K562 (cell line): ENCODE measurements at regions of chr9 and their contacts with region 1.

Region 1: GRCh38 chr9:12719431-12719830 is 26.2 kb downstream of the TYRP1 start:
- DNase-seq: no peak
- ATAC-seq: no peak
- H3K4me3 ChIP-seq: no peak overlapping the region
- H3K27ac ChIP-seq: no peak overlapping the region
- H3K4me1 ChIP-seq: no peaks in the 10 kb centered on the region
- H3K27me3 ChIP-seq: no peaks in the 10 kb centered on the region
- CTCF ChIP-seq: peak in 1 of 3 experiments; percentile 22; a peak in 1 of 6 replicates
- EP300 ChIP-seq: no peak
- POLR2A ChIP-seq: no peak
- RAD21 ChIP-seq: peak in 1 of 2 experiments; percentile 48; a peak in 3 of 4 replicates

Region 2: DNA sequence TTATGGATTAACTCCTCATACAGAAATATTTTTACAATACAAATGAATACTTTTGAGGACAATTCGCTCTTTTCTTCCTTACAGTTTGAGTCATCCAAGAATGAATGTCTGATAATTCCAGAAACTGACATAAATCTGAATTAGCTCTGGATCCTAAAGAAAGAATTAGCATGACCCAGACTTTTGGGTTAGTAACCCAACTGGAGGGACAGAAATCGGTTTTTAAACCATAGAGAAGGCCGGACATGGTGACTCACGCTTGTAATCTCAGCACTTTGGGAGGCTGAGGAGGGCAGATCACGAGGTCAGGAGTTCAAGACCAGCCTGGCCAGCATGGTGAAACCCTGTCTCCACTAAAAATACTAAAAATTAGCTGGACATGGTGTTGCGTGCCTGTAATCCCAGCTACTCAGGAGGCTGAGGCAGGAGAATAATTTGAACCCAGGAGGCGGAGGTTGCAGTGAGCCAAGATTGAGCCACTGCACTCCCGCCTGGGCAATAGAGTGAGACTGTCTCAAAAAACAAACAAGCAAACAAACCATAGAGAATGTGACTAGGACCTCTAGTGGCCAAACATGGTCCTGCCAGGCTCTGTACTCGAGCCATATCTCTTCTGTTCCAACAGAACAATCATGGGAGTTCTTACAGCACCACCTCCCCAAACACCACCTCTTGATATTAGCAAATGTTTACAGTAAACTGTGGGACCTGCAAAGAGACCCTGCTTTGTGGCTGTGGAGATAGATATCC is 100.2 kb after region 1 on chr9:
- CTCF ChIA-PET with region 1: interaction called, 3 read pairs
- POLR2A ChIA-PET with region 1: no interaction called
- in situ Hi-C with region 1: no loop called
- intact Hi-C with region 1: loop called (anchors 5 kb)
- DNase-seq: peak; percentile 4 to 18 (median 10)
- ATAC-seq: peak; percentile 73
- H3K4me3 ChIP-seq: no peak overlapping the region
- H3K27ac ChIP-seq: no peak overlapping the region
- H3K4me1 ChIP-seq: no peaks in the 10 kb centered on the region
- H3K27me3 ChIP-seq: no peaks in the 10 kb centered on the region
- CTCF ChIP-seq: peak; percentile 19 to 41 (median 38); a peak in 3 of 6 replicates
- EP300 ChIP-seq: no peak
- POLR2A ChIP-seq: no peak
- RAD21 ChIP-seq: peak; percentile 47 to 61

Region 3: GRCh38 chr9:13088720-13089427 is 369.4 kb after region 1 on chr9:
- CTCF ChIA-PET with region 1: no interaction called
- POLR2A ChIA-PET with region 1: no interaction called
- in situ Hi-C with region 1: no loop called
- intact Hi-C with region 1: loop called (anchors 5 kb)
- DNase-seq: peak; percentile 47 to 58 (median 50)
- ATAC-seq: peak; percentile 70; the same call in 2 of the 3 replicates
- H3K4me3 ChIP-seq: no peak overlapping the region
- H3K27ac ChIP-seq: no peak overlapping the region
- H3K4me1 ChIP-seq: no peaks in the 10 kb centered on the region
- H3K27me3 ChIP-seq: no peaks in the 10 kb centered on the region
- CTCF ChIP-seq: peak; percentile 22 to 59 (median 39); a peak in 4 of 6 replicates
- EP300 ChIP-seq: no peak
- POLR2A ChIP-seq: no peak
- RAD21 ChIP-seq: peak; percentile 35 to 52